ENCODE measurements at regions of chr3 and their contacts with region 1.

Region 1: DNA sequence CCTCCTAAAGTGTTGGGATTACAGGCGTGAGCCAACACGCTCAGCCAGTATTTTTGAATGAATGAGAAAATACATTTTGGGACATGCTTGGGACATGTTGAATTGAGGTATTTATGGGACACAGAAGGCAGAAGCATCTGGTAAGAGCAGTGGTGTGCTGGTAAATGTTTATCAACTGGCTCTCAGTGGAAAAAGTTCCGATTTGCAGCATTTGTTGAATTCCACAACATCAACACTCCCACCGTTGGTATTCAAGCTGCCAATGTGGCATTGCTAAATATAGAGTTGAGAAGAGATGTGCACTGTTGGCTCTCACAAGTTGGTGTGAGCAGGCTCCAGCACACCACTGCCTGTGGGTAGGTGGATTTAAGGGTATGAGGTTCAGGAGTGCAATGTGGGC is 35.8 kb upstream of the LRRFIP2 start:
- DNase-seq: no peak
- ATAC-seq: no peak
- H3K4me3 ChIP-seq: no peak overlapping the region
- H3K4me3 Mint-ChIP-seq: no peak overlapping the region
- H3K27ac ChIP-seq: no peak overlapping the region
- H3K27ac Mint-ChIP-seq: no peak overlapping the region
- H3K4me1 ChIP-seq: no peaks in the 10 kb centered on the region
- H3K4me1 Mint-ChIP-seq: peaks cover 3% of the 10 kb centered on the region
- H3K27me3 ChIP-seq: no peaks in the 10 kb centered on the region
- H3K27me3 Mint-ChIP-seq: no peaks in the 10 kb centered on the region
- CTCF ChIP-seq: no peak

Region 2: DNA sequence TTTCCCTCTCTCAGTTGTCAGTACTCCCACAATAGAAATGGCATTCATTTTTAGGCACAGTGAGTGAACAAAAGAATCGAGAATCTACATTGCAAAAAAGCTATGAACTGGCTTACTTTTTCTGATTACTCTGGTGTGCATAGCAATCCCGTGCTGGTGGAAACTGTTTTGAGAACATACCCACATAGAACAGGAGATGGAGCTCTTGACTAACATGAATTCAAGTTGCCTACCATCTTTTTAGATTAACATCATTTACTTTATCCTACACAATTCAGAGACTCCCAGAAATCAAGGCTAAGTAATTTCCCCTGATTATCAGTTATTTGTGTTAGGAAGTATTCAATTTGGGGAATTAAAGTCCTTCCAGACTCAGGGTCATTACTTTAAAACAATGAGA is 1244.3 kb before region 1 on chr3:
- CTCF ChIA-PET with region 1: no interaction called
- POLR2A ChIA-PET with region 1: no interaction called
- intact Hi-C with region 1: loop called in 1 of 2 experiments (anchors 10 kb)
- DNase-seq: peak in 1 of 9 experiments; percentile 3
- ATAC-seq: no peak
- H3K4me3 ChIP-seq: no peak overlapping the region
- H3K4me3 Mint-ChIP-seq: no peak overlapping the region
- H3K27ac ChIP-seq: no peak overlapping the region
- H3K27ac Mint-ChIP-seq: no peak overlapping the region
- H3K4me1 ChIP-seq: no peaks in the 10 kb centered on the region
- H3K4me1 Mint-ChIP-seq: peaks cover 8% of the 10 kb centered on the region
- H3K27me3 ChIP-seq: no peaks in the 10 kb centered on the region
- H3K27me3 Mint-ChIP-seq: no peaks in the 10 kb centered on the region
- CTCF ChIP-seq: peak; percentile 41

Region 3: GRCh38 chr3:36729204-36730056 is 480.8 kb before region 1 on chr3:
- CTCF ChIA-PET with region 1: no interaction called
- POLR2A ChIA-PET with region 1: no interaction called
- intact Hi-C with region 1: loop called in 1 of 2 experiments (anchors 2 kb)
- DNase-seq: peak in 2 of 9 experiments; percentile 45 to 57
- ATAC-seq: peak; percentile 44
- H3K4me3 ChIP-seq: no peak overlapping the region
- H3K4me3 Mint-ChIP-seq: no peak overlapping the region
- H3K27ac ChIP-seq: no peak overlapping the region
- H3K27ac Mint-ChIP-seq: no peak overlapping the region
- H3K4me1 ChIP-seq: no peaks in the 10 kb centered on the region
- H3K4me1 Mint-ChIP-seq: no peaks in the 10 kb centered on the region
- H3K27me3 ChIP-seq: no peaks in the 10 kb centered on the region
- H3K27me3 Mint-ChIP-seq: peaks cover 4% of the 10 kb centered on the region
- CTCF ChIP-seq: peak; percentile 41

Region 4: DNA sequence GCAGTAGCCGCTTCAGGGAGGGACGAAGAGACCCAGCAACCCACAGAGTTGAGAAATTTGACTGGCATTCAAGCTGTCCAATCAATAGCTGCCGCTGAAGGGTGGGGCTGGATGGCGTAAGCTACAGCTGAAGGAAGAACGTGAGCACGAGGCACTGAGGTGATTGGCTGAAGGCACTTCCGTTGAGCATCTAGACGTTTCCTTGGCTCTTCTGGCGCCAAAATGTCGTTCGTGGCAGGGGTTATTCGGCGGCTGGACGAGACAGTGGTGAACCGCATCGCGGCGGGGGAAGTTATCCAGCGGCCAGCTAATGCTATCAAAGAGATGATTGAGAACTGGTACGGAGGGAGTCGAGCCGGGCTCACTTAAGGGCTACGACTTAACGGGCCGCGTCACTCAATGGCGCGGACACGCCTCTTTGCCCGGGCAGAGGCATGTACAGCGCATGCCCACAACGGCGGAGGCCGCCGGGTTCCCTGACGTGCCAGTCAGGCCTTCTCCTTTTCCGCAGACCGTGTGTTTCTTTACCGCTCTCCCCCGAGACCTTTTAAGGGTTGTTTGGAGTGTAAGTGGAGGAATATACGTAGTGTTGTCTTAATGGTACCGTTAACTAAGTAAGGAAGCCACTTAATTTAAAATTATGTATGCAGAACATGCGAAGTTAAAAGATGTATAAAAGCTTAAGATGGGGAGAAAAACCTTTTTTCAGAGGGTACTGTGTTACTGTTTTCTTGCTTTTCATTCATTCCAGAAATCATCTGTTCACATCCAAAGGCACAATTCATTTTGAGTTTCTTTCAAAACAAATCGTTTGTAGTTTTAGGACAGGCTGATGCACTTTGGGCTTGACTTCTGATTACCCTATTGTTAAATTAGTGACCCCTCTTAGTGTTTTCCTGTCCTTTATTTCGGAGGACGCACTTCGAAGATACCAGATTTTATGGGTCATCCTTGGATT is 216.6 kb before region 1 on chr3 and contains the start of gene MLH1:
- CTCF ChIA-PET with region 1: interaction called, 3 read pairs
- POLR2A ChIA-PET with region 1: interaction called, 3 read pairs
- intact Hi-C with region 1: loop called in 1 of 2 experiments (anchors 1 kb)
- DNase-seq: peak in 8 of 9 experiments; percentile 95 to 100 (median 97)
- ATAC-seq: peak; percentile 81
- H3K4me3 ChIP-seq: peak within 1 kb of the TSS; percentile 58 to 77
- H3K4me3 Mint-ChIP-seq: no peak within 1 kb of the TSS
- H3K27ac ChIP-seq: peak within 1 kb of the TSS; percentile 89 to 99
- H3K27ac Mint-ChIP-seq: no peak within 1 kb of the TSS
- H3K4me1 ChIP-seq: peaks cover 44% of the 10 kb centered on the region
- H3K4me1 Mint-ChIP-seq: peaks cover 35% of the 10 kb centered on the region
- H3K27me3 ChIP-seq: no peaks in the 10 kb centered on the region
- H3K27me3 Mint-ChIP-seq: no peaks in the 10 kb centered on the region
- CTCF ChIP-seq: no peak
- total RNA-seq, gene MLH1: 21.4 to 23.9 TPM

Region 5: GRCh38 chr3:37024092-37024491 is 186.1 kb before region 1 on chr3:
- CTCF ChIA-PET with region 1: interaction called, 6 read pairs
- POLR2A ChIA-PET with region 1: no interaction called
- intact Hi-C with region 1: loop called (anchors 1 kb)
- DNase-seq: peak in 2 of 9 experiments; percentile 5 to 31
- ATAC-seq: peak; percentile 51
- H3K4me3 ChIP-seq: no peak overlapping the region
- H3K4me3 Mint-ChIP-seq: no peak overlapping the region
- H3K27ac ChIP-seq: no peak overlapping the region
- H3K27ac Mint-ChIP-seq: no peak overlapping the region
- H3K4me1 ChIP-seq: no peaks in the 10 kb centered on the region
- H3K4me1 Mint-ChIP-seq: peaks cover 2% of the 10 kb centered on the region
- H3K27me3 ChIP-seq: no peaks in the 10 kb centered on the region
- H3K27me3 Mint-ChIP-seq: no peaks in the 10 kb centered on the region
- CTCF ChIP-seq: peak; percentile 34

Region 6: GRCh38 chr3:37054370-37054769 is 155.9 kb before region 1 on chr3:
- CTCF ChIA-PET with region 1: no interaction called
- POLR2A ChIA-PET with region 1: no interaction called
- intact Hi-C with region 1: no loop called
- DNase-seq: no peak
- ATAC-seq: no peak
- H3K4me3 ChIP-seq: no peak overlapping the region
- H3K4me3 Mint-ChIP-seq: no peak overlapping the region
- H3K27ac ChIP-seq: no peak overlapping the region
- H3K27ac Mint-ChIP-seq: peak overlapping the region; percentile 68
- H3K4me1 ChIP-seq: no peaks in the 10 kb centered on the region
- H3K4me1 Mint-ChIP-seq: no peaks in the 10 kb centered on the region
- H3K27me3 ChIP-seq: no peaks in the 10 kb centered on the region
- H3K27me3 Mint-ChIP-seq: no peaks in the 10 kb centered on the region
- CTCF ChIP-seq: no peak

Region 7: GRCh38 chr3:37223141-37223558 is 12.9 kb after region 1 on chr3:
- CTCF ChIA-PET with region 1: interaction called, 14 read pairs
- POLR2A ChIA-PET with region 1: interaction called, 3 read pairs
- intact Hi-C with region 1: no loop called
- DNase-seq: peak in 1 of 9 experiments; percentile 37
- ATAC-seq: no peak
- H3K4me3 ChIP-seq: no peak overlapping the region
- H3K4me3 Mint-ChIP-seq: no peak overlapping the region
- H3K27ac ChIP-seq: no peak overlapping the region
- H3K27ac Mint-ChIP-seq: no peak overlapping the region
- H3K4me1 ChIP-seq: peaks cover 41% of the 10 kb centered on the region
- H3K4me1 Mint-ChIP-seq: peaks cover 50% of the 10 kb centered on the region
- H3K27me3 ChIP-seq: no peaks in the 10 kb centered on the region
- H3K27me3 Mint-ChIP-seq: no peaks in the 10 kb centered on the region
- CTCF ChIP-seq: no peak

Measured in CD8-positive, alpha-beta T cell (primary cell).